ENCODE measurements at regions of chr11 and their contacts with region 1.

Region 1: DNA sequence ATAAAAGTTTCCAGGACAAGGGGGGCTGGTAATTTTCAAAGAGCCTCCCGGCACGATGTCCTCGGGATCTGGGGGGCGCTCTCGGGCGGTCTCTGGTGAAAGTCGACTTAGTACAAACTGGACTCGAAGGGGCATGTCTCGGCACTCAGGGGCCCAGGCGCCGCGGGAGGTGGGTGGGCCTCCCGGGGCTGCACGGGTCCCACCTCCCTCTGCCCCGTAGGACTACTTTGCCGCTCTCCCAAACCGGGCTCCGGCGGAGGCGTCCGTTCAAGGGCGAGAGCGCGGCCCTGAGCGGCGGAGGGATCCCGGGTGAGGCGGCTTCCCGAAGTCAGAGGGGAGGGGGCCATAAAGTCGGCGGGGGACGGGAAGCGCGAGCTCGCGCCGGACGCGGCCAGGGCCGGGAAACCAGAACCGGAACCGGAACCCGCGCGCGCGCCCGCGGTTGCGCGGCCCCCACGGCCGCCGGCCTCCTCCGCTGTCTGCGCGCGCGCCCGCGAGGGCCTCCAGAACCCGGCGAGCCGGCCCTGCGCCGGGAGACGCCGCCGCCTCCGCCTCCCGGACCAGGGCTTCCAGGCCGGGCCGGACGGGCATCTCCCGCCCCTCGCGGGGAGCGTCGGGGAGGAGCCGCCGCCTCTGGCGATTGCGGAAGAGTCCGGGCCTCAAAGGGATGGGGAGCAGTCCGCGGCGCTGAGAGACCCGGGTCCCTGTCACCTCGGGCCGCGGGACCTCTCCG is at the start of gene ARHGEF12:
- DNase-seq: peak; percentile 87
- H3K4me3 Mint-ChIP-seq: peak within 1 kb of the TSS; percentile 87
- H3K27ac Mint-ChIP-seq: peak within 1 kb of the TSS; percentile 57
- H3K4me1 Mint-ChIP-seq: peaks cover 34% of the 10 kb centered on the region
- H3K27me3 Mint-ChIP-seq: peaks cover 50% of the 10 kb centered on the region
- total RNA-seq, gene ARHGEF12: 15.4 to 16.5 TPM

Region 2: GRCh38 chr11:120324932-120325810 is 10.9 kb before region 1 on chr11 and contains the start of gene TLCD5:
- CTCF ChIA-PET with region 1: interaction called, 5 read pairs
- intact Hi-C with region 1: loop called (anchors 1 kb)
- DNase-seq: peak; percentile 69
- H3K4me3 Mint-ChIP-seq: peak within 1 kb of the TSS; percentile 72
- H3K27ac Mint-ChIP-seq: no peak within 1 kb of the TSS
- H3K4me1 Mint-ChIP-seq: peaks cover 13% of the 10 kb centered on the region
- H3K27me3 Mint-ChIP-seq: peaks cover 51% of the 10 kb centered on the region
- total RNA-seq, gene TLCD5: 1.2 to 2.2 TPM

Region 3: DNA sequence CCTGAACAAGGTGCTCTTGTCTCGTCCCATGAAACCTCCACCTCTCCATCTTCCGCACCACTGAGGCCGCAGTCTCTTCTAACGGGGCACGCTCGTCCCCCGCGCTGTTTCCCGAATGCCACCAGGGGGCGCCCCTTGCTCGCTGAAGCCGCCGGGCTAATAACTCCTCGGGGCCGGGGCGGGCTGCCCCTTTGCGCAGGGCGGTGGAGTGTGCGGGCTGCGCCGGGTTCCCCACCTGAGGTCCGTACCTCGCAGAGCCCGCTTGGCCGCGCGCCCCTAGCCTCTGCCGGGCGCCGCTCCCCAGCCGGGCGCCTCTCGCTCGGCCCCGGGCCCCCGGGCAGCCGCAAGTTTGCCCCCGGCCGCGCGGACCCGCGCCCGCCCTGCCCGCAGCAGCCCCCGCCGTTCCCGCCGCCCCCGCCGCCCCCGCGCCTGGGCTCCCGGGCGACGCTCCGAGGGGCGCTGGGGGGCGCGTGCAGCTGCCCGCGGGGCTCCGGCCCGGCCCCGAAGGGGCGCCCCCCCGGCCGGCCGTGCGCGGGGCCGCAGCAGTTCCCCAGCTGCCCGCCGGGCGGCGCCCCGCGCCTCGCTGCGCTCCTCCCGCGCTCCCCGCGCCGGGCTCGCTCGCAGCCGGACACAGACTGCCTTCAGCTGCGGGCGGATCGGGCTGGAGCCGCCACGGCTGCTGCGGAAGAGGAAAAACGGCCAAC is 175.2 kb after region 1 on chr11 and contains the start of gene GRIK4:
- CTCF ChIA-PET with region 1: no interaction called
- intact Hi-C with region 1: loop called (anchors 2 kb)
- DNase-seq: peak; percentile 87
- H3K4me3 Mint-ChIP-seq: peak within 1 kb of the TSS; percentile 16
- H3K27ac Mint-ChIP-seq: no peak within 1 kb of the TSS
- H3K4me1 Mint-ChIP-seq: peaks cover 2% of the 10 kb centered on the region
- H3K27me3 Mint-ChIP-seq: peaks cover 66% of the 10 kb centered on the region
- total RNA-seq, gene GRIK4: not detected

Region 4: GRCh38 chr11:120622189-120622875 is 286.3 kb after region 1 on chr11:
- CTCF ChIA-PET with region 1: no interaction called
- intact Hi-C with region 1: no loop called
- DNase-seq: peak; percentile 13
- H3K4me3 Mint-ChIP-seq: no peak overlapping the region
- H3K27ac Mint-ChIP-seq: no peak overlapping the region
- H3K4me1 Mint-ChIP-seq: no peaks in the 10 kb centered on the region
- H3K27me3 Mint-ChIP-seq: peaks cover 6% of the 10 kb centered on the region

Region 5: GRCh38 chr11:120801801-120802689 is 466.0 kb after region 1 on chr11:
- CTCF ChIA-PET with region 1: no interaction called
- intact Hi-C with region 1: loop called (anchors 1 kb)
- DNase-seq: peak; percentile 65
- H3K4me3 Mint-ChIP-seq: no peak overlapping the region
- H3K27ac Mint-ChIP-seq: no peak overlapping the region
- H3K4me1 Mint-ChIP-seq: no peaks in the 10 kb centered on the region
- H3K27me3 Mint-ChIP-seq: peaks cover 21% of the 10 kb centered on the region

Region 6: GRCh38 chr11:121292495-121293287 is 956.6 kb after region 1 on chr11 and contains the start of gene SC5D:
- CTCF ChIA-PET with region 1: no interaction called
- intact Hi-C with region 1: loop called (anchors 2 kb)
- DNase-seq: peak; percentile 97
- H3K4me3 Mint-ChIP-seq: peak within 1 kb of the TSS; percentile 90
- H3K27ac Mint-ChIP-seq: peak within 1 kb of the TSS; percentile 95
- H3K4me1 Mint-ChIP-seq: peaks cover 32% of the 10 kb centered on the region
- H3K27me3 Mint-ChIP-seq: no peaks in the 10 kb centered on the region
- total RNA-seq, gene SC5D: 29.6 to 31.7 TPM